A673 (cell line): ENCODE measurements at regions of chr6 and their contacts with region 1.

Region 1: GRCh38 chr6:40856271-40856670 is 182.8 kb downstream of the UNC5CL start:
- DNase-seq: no peak
- H3K4me3 ChIP-seq: no peak overlapping the region
- H3K27ac ChIP-seq: no peak overlapping the region
- H3K4me1 ChIP-seq: no peaks in the 10 kb centered on the region
- H3K27me3 ChIP-seq: no peaks in the 10 kb centered on the region
- CTCF ChIP-seq: no peak

Region 2: DNA sequence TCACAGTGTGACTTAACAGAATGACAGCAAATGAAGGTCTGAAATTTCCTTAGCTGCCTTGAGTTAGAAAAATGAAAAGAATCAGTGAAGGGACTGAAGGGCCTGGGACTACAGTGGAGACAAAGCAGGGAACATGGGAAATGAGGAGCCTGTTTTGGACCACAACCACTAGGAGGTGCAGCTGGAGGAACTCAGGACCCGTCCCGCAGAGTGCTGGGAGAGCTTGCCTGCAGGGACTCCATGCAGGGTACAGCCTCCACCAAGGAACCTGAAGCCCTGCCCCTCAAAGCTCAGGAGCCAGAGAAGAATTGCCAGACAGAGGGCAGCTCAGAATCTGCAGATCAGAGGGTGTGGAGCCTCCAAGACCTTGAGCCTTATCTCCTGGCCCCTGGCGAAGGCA is 319.8 kb before region 1 on chr6:
- CTCF ChIA-PET with region 1: no interaction called
- POLR2A ChIA-PET with region 1: no interaction called
- intact Hi-C with region 1: no loop called
- DNase-seq: peak; percentile 71
- H3K4me3 ChIP-seq: no peak overlapping the region
- H3K27ac ChIP-seq: peak overlapping the region; percentile 48
- H3K4me1 ChIP-seq: peaks cover 32% of the 10 kb centered on the region
- H3K27me3 ChIP-seq: no peaks in the 10 kb centered on the region
- CTCF ChIP-seq: peak; percentile 59

Region 3: GRCh38 chr6:41132254-41132653 is 276.0 kb after region 1 on chr6:
- CTCF ChIA-PET with region 1: no interaction called
- POLR2A ChIA-PET with region 1: interaction called, 13 read pairs
- intact Hi-C with region 1: no loop called
- DNase-seq: no peak
- H3K4me3 ChIP-seq: no peak overlapping the region
- H3K27ac ChIP-seq: no peak overlapping the region
- H3K4me1 ChIP-seq: no peaks in the 10 kb centered on the region
- H3K27me3 ChIP-seq: no peaks in the 10 kb centered on the region
- CTCF ChIP-seq: no peak